Lower leg skin (tissue), 4 donors: ENCODE measurements at regions of chr1 and their contacts with region 1.

Region 1: GRCh38 chr1:182604169-182605164 is at the start of gene RGS16:
- DNase-seq: peak; percentile 92 to 99
- H3K4me3 ChIP-seq: no peak within 1 kb of the TSS
- CTCF ChIP-seq: no peak
- POLR2A ChIP-seq: peak in 1 of 2 donors; percentile 6
- total RNA-seq, gene RGS16: 0.37 to 1.2 (median 1.1) TPM in 3 of 4 donors, not detected in the other

Region 2: GRCh38 chr1:182084487-182085316 is 519.8 kb before region 1 on chr1:
- intact Hi-C with region 1: loop called (anchors 5 kb)
- DNase-seq: peak; percentile 92 to 98
- H3K4me3 ChIP-seq: no peak overlapping the region
- CTCF ChIP-seq: peak in 2 of 3 donors; percentile 53 to 89
- POLR2A ChIP-seq: no peak

Region 3: DNA sequence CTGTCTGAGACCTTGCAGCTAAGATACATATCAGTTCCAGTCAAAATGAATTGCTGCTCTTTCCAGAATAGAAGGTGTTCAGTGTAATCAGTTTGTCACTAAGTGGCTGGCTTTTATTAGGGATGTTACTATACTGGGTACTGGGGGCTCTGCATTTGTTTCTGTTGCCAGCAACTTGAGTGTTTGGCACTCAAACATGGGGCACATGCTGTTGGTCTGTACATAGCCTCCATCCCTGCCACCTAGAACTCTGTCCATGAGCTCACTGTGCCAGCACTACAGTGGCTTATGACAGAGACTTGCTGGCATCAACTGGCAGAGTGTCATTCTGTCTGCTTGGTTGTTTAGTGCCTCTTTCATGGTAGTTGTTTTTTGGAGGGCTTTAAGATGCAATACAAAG is 109.5 kb before region 1 on chr1:
- intact Hi-C with region 1: no loop called
- DNase-seq: no peak
- H3K4me3 ChIP-seq: no peak overlapping the region
- CTCF ChIP-seq: no peak
- POLR2A ChIP-seq: no peak

Region 4: DNA sequence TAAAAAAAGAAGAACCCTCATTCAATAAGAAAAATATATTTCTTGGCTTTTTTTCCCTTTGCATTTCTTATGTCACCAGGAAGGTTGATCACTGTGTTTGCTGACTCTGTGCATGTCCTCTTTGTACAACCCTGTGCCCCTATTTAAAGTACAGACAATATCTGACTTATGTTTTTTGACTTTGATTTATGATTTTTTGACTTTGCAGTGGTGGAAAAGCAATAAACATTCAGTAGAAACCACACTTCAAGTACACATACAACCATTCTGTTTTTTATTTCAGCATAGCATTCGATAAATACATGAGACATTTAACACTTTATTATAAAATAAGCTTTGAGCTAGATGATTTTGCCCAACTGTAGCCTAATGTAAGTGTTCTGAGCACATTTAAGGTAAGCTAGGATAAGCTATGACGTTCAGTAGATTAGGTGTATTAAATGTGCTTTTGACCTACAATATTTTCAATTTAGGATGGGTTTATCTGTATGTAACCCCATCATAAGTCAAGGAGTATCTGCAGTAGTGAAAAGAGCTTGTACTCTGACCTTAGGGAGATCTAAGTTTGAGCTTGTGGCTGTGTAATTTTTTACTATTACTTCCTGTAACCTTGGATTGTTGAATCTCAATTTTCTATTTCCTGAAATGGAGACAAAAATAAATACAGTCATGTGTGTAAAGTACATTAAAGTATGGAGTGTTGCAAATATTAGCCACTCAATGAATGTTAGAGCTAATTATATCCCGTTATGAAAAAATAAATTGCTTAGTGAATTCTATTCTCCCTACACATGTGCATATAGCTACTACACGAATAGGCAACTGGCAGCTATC is 16.6 kb before region 1 on chr1:
- intact Hi-C with region 1: no loop called
- DNase-seq: no peak
- H3K4me3 ChIP-seq: peak overlapping the region; percentile 73
- CTCF ChIP-seq: no peak
- POLR2A ChIP-seq: no peak

Region 5: DNA sequence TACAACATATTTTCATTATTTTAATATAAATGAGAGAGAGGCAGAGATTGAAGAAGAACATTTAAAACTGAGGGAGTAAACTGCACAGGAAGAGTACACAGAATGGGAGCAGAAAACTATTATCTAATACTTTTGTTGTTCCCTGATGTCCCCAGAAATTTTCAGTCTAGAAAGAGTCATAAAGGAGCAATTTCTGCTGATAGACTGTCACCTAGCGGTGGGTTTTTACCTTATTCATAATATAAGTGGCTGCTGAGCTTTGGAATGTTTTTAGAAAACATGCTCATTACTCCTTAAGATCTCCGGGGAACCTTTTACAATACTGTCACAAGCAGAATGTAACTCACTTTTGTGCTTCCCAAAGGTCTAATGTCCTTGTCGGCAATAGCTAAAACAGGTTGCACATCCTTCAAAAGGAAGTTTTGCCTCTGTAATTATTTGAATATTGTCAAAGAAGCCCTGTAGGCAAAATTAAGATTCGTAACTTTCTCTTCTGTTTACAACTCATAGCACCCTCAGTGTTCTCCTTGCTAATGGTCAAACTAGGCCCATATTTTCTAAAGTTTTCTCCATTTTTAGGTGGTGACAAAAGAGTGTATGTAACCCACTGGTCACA is 180.2 kb after region 1 on chr1:
- intact Hi-C with region 1: loop called (anchors 2 kb)
- DNase-seq: peak in 1 of 2 donors; percentile 14
- H3K4me3 ChIP-seq: no peak overlapping the region
- CTCF ChIP-seq: no peak
- POLR2A ChIP-seq: no peak